Activated T-helper 2 cell treated with anti-CD3 and anti-CD28 coated beads, Interferon-gamma antibody, Interleukin-2, Interleukin-4, amounts not matched to agents 10 μg/mL and 5 μg/mL and 100 μg/mL, durations not matched to agents 14 hours and 24 hours and 36 hours (primary cell): ENCODE measurements at regions of chr5 and their contacts with region 1.

Region 1: GRCh38 chr5:91162534-91163381 is 220.4 kb downstream of the ARRDC3 start:
- DNase-seq: peak; percentile 64
- H3K4me3 Mint-ChIP-seq: peak overlapping the region; percentile 27
- H3K27ac Mint-ChIP-seq: peak overlapping the region; percentile 77
- H3K4me1 Mint-ChIP-seq: peaks cover 39% of the 10 kb centered on the region
- H3K27me3 Mint-ChIP-seq: no peaks in the 10 kb centered on the region

Region 2: GRCh38 chr5:90940227-90940995 is 222.3 kb before region 1 on chr5:
- intact Hi-C with region 1: loop called (anchors 1 kb)
- DNase-seq: peak; percentile 39
- H3K4me3 Mint-ChIP-seq: no peak overlapping the region
- H3K27ac Mint-ChIP-seq: peak overlapping the region; percentile 82
- H3K4me1 Mint-ChIP-seq: peaks cover 36% of the 10 kb centered on the region
- H3K27me3 Mint-ChIP-seq: no peaks in the 10 kb centered on the region

Region 3: GRCh38 chr5:90968319-90968718 is 194.4 kb before region 1 on chr5:
- intact Hi-C with region 1: loop called (anchors 2 kb)
- DNase-seq: no peak
- H3K4me3 Mint-ChIP-seq: no peak overlapping the region
- H3K27ac Mint-ChIP-seq: peak overlapping the region; percentile 63
- H3K4me1 Mint-ChIP-seq: peaks cover 33% of the 10 kb centered on the region
- H3K27me3 Mint-ChIP-seq: no peaks in the 10 kb centered on the region

Region 4: DNA sequence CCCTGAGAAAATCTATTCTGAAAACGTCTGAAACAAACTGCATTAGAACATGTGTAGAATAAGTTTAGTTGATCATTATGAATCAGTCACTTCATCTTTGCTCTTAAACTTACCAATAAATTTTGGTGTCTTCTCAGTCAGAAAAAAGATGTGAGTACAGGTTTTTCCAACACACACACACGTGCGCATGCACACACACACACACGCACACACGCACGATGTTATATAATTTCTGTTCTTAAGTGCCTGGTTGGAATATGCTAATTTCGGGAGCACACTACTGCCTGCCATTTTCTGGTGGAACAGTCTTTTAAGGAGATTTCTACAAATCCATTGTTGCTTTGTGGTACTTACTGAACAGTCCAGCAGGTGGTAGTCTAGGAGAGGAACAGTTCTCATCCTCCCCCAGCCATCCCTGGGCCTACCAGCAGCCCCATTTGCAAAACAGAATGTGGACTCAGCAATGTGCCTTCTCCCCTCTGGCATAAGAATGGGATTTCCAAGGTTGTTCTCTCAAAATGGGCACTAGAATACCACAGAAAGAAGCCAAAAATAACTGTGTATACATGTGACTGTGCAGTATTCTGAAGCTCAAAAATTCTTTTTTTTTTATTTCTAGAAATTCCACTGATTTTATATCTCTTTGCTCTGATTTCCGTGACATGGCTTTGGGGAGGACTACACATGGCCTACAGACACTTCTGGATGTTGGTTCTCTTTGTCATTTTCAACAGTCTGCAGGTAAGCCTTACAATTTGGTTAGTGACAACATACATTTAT is 61.0 kb before region 1 on chr5:
- intact Hi-C with region 1: loop called (anchors 5 kb)
- DNase-seq: peak; percentile 33
- H3K4me3 Mint-ChIP-seq: no peak overlapping the region
- H3K27ac Mint-ChIP-seq: no peak overlapping the region
- H3K4me1 Mint-ChIP-seq: peaks cover 2% of the 10 kb centered on the region
- H3K27me3 Mint-ChIP-seq: peaks cover 9% of the 10 kb centered on the region

Region 5: DNA sequence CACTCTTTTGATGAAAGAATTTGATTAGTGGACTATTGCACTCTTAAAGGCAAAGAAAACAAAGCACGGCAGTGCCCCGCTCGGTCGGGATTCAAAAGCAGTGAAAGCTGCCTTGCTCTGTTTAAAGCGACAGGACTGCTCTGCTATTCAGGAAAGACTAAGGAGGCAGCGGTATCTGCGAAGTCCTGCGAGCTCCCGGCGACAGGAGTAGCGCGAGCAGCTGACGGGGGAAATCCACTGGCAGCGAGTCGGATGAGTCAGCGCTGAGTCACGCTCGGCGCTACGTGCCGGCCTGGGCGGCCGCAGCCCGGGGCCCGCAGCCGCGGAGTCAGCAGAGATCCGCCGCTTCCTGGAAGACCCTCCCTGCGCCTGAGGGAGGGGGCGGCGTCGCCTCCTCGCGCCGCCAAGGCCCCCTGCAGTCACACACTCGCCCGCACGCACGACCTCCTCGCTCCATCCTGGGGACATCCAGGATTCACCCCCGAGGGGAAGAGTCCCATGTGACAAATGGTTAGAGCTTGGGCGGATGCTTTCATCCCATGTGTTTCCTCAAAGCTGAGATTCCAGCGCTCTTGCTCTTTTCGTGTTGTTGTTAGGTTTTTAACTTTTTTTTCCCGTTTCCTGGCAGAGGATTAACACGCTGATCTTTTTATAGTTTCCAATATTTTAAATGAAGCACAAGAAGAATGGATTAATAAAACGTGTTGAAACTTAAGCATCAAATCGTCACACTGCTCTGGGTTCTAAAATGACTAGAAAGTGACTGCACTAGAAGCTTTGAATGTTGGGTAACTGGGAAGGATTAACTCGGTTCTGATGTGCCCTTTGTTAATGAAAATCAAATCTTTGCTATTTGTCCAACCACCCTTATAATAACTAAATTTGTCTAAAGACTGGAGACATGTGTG is 117.9 kb after region 1 on chr5:
- intact Hi-C with region 1: loop called (anchors 2 kb)
- DNase-seq: peak; percentile 79
- H3K4me3 Mint-ChIP-seq: peak overlapping the region; percentile 81
- H3K27ac Mint-ChIP-seq: peak overlapping the region; percentile 96
- H3K4me1 Mint-ChIP-seq: peaks cover 36% of the 10 kb centered on the region
- H3K27me3 Mint-ChIP-seq: peaks cover 10% of the 10 kb centered on the region

Region 6: GRCh38 chr5:91332267-91333045 is 169.7 kb after region 1 on chr5:
- intact Hi-C with region 1: loop called (anchors 5 kb)
- DNase-seq: no peak
- H3K4me3 Mint-ChIP-seq: no peak overlapping the region
- H3K27ac Mint-ChIP-seq: peak overlapping the region; percentile 6
- H3K4me1 Mint-ChIP-seq: peaks cover 30% of the 10 kb centered on the region
- H3K27me3 Mint-ChIP-seq: peaks cover 25% of the 10 kb centered on the region